CD4-positive, alpha-beta T cell (primary cell): ENCODE measurements at regions of chr19 and their contacts with region 1.

Region 1: GRCh38 chr19:51166846-51167490 is 24.9 kb downstream of the SIGLEC7 start:
- DNase-seq: peak in 8 of 14 experiments; percentile 6 to 69 (median 16)
- ATAC-seq: peak; percentile 46
- H3K4me3 ChIP-seq: peak overlapping the region; percentile 9
- H3K4me3 Mint-ChIP-seq: no peak overlapping the region
- H3K27ac ChIP-seq: no peak overlapping the region
- H3K27ac Mint-ChIP-seq: no peak overlapping the region
- H3K4me1 ChIP-seq: peaks cover 24% of the 10 kb centered on the region
- H3K4me1 Mint-ChIP-seq: peaks cover 13% of the 10 kb centered on the region
- H3K27me3 ChIP-seq: peaks cover 0 to 2% of the 10 kb centered on the region in 2 experiments
- H3K27me3 Mint-ChIP-seq: peaks cover 5% of the 10 kb centered on the region
- CTCF ChIP-seq: no peak

Region 2: DNA sequence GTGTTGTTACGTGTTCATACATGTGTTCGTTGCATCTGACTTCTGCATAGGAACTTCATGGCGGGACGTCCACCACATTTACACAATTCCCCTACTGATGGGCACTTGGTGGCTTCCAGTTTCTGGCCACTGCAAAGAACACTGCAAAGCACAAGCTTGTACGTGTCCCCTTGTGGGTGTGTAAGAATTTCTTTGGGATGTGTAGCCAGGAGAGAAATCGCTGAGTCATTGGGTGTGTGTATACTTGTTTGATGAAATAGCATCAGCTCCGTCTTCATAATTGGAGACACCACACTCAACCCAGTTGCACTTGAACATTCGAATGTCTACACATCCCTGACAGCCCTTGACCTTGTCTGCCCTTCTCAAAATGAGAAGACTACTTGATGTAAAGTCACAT is 233.3 kb before region 1 on chr19:
- CTCF ChIA-PET with region 1: no interaction called
- POLR2A ChIA-PET with region 1: no interaction called
- intact Hi-C with region 1: loop called in 1 of 2 experiments (anchors 1 kb)
- DNase-seq: no peak
- ATAC-seq: no peak
- H3K4me3 ChIP-seq: no peak overlapping the region
- H3K4me3 Mint-ChIP-seq: no peak overlapping the region
- H3K27ac ChIP-seq: no peak overlapping the region
- H3K27ac Mint-ChIP-seq: no peak overlapping the region
- H3K4me1 ChIP-seq: no peaks in the 10 kb centered on the region
- H3K4me1 Mint-ChIP-seq: peaks cover 5% of the 10 kb centered on the region
- H3K27me3 ChIP-seq: peaks cover 15 to 20% of the 10 kb centered on the region in 2 experiments
- H3K27me3 Mint-ChIP-seq: peaks cover 51% of the 10 kb centered on the region
- CTCF ChIP-seq: no peak

Region 3: GRCh38 chr19:51020988-51021651 is 145.8 kb before region 1 on chr19:
- CTCF ChIA-PET with region 1: no interaction called
- POLR2A ChIA-PET with region 1: no interaction called
- intact Hi-C with region 1: loop called (anchors 1 to 2 kb)
- DNase-seq: peak in 4 of 14 experiments; percentile 20 to 49 (median 36)
- ATAC-seq: no peak
- H3K4me3 ChIP-seq: no peak overlapping the region
- H3K4me3 Mint-ChIP-seq: no peak overlapping the region
- H3K27ac ChIP-seq: no peak overlapping the region
- H3K27ac Mint-ChIP-seq: no peak overlapping the region
- H3K4me1 ChIP-seq: peaks cover 27% of the 10 kb centered on the region
- H3K4me1 Mint-ChIP-seq: peaks cover 22% of the 10 kb centered on the region
- H3K27me3 ChIP-seq: peaks cover 35 to 38% of the 10 kb centered on the region in 2 experiments
- H3K27me3 Mint-ChIP-seq: peaks cover 75% of the 10 kb centered on the region
- CTCF ChIP-seq: peak; percentile 45

Region 4: DNA sequence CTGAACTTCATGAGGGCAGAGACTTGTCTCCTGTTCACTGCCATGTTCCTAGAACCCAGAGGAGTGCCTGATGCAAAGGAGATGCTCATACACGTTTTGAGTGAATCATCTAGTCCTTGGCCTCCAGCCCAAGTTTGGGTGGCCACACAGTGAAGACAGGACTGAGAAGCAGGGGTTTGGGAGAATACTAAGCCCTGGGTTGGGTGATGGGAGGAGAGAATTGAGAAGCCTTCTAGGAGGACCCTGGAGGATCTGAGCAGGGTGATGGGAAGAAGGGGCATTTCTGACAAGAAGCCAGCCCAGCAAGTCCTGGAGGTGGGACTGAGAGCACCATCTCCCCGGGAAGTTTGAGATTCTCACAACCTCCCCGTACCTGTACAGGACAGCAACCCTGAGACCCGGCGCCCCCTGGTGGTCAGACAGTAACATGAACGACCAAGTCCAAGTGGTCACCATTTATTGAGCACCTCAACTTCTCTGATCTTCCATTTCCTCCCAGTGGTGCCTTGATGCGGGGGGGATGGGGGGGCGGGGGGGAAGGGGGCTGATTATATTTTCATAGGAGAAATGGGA is 69.7 kb before region 1 on chr19:
- CTCF ChIA-PET with region 1: no interaction called
- POLR2A ChIA-PET with region 1: no interaction called
- intact Hi-C with region 1: loop called in 1 of 2 experiments (anchors 5 kb)
- DNase-seq: peak; percentile 50 to 80 (median 65)
- ATAC-seq: peak; percentile 50
- H3K4me3 ChIP-seq: no peak overlapping the region
- H3K4me3 Mint-ChIP-seq: no peak overlapping the region
- H3K27ac ChIP-seq: no peak overlapping the region
- H3K27ac Mint-ChIP-seq: no peak overlapping the region
- H3K4me1 ChIP-seq: peaks cover 17% of the 10 kb centered on the region
- H3K4me1 Mint-ChIP-seq: peaks cover 23% of the 10 kb centered on the region
- H3K27me3 ChIP-seq: no peaks in the 10 kb centered on the region
- H3K27me3 Mint-ChIP-seq: no peaks in the 10 kb centered on the region
- CTCF ChIP-seq: peak; percentile 42